ENCODE measurements at regions of chrX and their contacts with region 1.

Region 1: GRCh38 chrX:10615931-10616775 is 4.2 kb downstream of the MID1 start:
- DNase-seq: peak; percentile 46
- H3K4me3 ChIP-seq: no peak overlapping the region
- H3K27ac ChIP-seq: peak overlapping the region; percentile 23 to 85 (median 80)
- H3K4me1 ChIP-seq: peaks cover 0 to 22% (median 12%) of the 10 kb centered on the region in 4 donors
- H3K27me3 ChIP-seq: no peaks in the 10 kb centered on the region
- CTCF ChIP-seq: peak; percentile 52 to 62 (median 60)
- EP300 ChIP-seq: no peak
- POLR2A ChIP-seq: no peak

Region 2: GRCh38 chrX:9724713-9725112 is 891.4 kb before region 1 on chrX:
- in situ Hi-C with region 1: no loop called
- intact Hi-C with region 1: no loop called
- DNase-seq: no peak
- H3K4me3 ChIP-seq: no peak overlapping the region
- H3K27ac ChIP-seq: no peak overlapping the region
- H3K4me1 ChIP-seq: no peaks in the 10 kb centered on the region
- H3K27me3 ChIP-seq: no peaks in the 10 kb centered on the region
- CTCF ChIP-seq: no peak
- EP300 ChIP-seq: no peak
- POLR2A ChIP-seq: no peak

Region 3: DNA sequence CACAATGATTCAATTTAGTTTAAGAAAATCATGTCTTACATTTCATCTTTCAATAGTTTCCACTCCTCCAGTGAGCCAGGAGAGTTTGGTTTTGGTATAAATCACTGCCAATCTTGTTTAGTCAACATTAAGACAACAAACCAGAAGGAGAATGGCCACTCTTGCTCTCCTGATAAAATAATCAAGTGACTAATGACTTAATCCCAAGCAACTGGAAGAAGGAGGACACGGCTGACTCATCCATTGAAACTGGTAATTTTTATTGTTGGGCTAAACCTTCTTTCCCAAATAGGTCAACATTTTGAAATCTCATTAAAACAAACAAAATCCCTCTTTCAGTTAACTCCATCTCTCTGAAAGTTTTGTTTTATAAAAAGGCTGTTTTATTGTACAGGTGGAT is 229.1 kb before region 1 on chrX:
- in situ Hi-C with region 1: no loop called
- intact Hi-C with region 1: no loop called
- DNase-seq: no peak
- H3K4me3 ChIP-seq: no peak overlapping the region
- H3K27ac ChIP-seq: no peak overlapping the region
- H3K4me1 ChIP-seq: no peaks in the 10 kb centered on the region
- H3K27me3 ChIP-seq: no peaks in the 10 kb centered on the region
- CTCF ChIP-seq: no peak
- EP300 ChIP-seq: no peak
- POLR2A ChIP-seq: no peak

Region 4: DNA sequence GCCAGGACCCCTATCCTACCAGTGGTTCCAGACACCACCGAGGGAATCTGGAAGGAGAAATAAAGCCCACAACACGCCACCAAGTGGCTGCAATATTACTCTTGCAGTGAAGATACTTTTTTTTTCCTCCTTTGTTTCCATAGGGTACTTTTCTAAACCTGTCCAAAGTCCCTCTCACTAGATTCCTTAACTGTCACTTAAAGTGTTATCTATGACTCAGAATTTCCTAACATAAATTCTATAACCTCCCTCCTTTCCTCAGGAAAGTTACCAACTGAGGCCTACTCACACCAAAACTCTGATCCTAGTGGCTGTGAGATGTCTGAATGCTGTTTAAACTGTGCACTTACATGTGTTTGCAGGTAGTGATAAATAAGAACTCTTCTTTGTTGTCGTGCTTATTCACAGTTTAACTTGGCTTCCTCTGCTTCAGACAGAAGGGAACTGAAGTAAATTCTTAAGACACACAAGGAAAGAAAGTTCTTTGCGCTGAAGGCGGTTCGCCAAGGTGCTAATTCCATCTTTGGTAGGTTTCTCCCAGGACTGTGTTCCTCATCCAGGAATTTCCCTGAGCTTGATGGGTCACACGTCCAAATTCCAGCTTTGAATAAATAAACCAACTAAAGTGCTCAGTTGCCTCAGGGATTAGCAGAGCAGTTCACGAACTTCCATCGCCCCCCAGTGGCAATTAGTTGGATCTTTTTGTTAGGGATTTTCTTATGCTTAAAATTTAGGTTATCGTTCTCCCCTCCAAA is 484.3 kb after region 1 on chrX:
- in situ Hi-C with region 1: loop called in 1 of 4 experiments (anchors 10 kb)
- intact Hi-C with region 1: no loop called
- DNase-seq: peak; percentile 20
- H3K4me3 ChIP-seq: no peak overlapping the region
- H3K27ac ChIP-seq: peak overlapping the region; percentile 50 to 72 (median 60)
- H3K4me1 ChIP-seq: peaks cover 0 to 5% (median 0%) of the 10 kb centered on the region in 4 donors
- H3K27me3 ChIP-seq: no peaks in the 10 kb centered on the region
- CTCF ChIP-seq: peak; percentile 34 to 49 (median 38)
- EP300 ChIP-seq: no peak
- POLR2A ChIP-seq: no peak